Head of caudate nucleus (tissue), 42 donors: ENCODE measurements at regions of chr19 and their contacts with region 1.

Region 1: GRCh38 chr19:10251792-10252694 is at the start of gene MRPL4:
- DNase-seq: peak; percentile 89 to 99 (median 97)

Region 2: GRCh38 chr19:10112895-10113591 is 139.0 kb before region 1 on chr19:
- intact Hi-C with region 1: loop called (anchors 10 kb)
- DNase-seq: peak in 38 of 42 donors; percentile 22 to 77 (median 56)

Region 3: GRCh38 chr19:10194500-10195289 is 57.3 kb before region 1 on chr19 and contains the start of gene DNMT1:
- intact Hi-C with region 1: loop called (anchors 5 kb)
- DNase-seq: peak; percentile 88 to 99 (median 97)

Region 4: GRCh38 chr19:10206226-10206885 is 45.7 kb before region 1 on chr19:
- intact Hi-C with region 1: no loop called
- DNase-seq: no peak